CD4-positive, alpha-beta memory T cell (primary cell): ENCODE measurements at regions of chr10 and their contacts with region 1.

Region 1: DNA sequence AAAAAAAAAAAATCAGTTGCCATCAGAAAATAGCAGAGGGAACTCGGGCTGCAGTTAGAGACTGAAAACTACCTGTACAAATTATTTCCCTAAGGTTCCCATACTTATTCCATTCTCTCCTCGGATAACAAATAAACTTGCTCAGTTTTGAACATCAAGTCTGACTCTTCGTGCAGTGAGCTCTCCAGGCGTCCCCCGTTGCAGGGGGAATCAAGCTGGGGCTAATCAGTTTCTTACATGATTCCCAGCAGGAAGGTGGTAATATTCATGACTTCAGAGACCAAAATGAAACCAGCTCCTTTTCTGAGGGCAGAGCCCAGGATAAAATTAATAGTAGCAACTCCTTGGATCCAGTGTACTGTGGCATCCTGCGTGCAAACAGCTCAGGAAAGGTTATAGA is 135.3 kb downstream of the FRMD4A start:
- DNase-seq: no peak
- H3K4me3 ChIP-seq: no peak overlapping the region
- H3K4me3 Mint-ChIP-seq: no peak overlapping the region
- H3K27ac ChIP-seq: no peak overlapping the region
- H3K27ac Mint-ChIP-seq: no peak overlapping the region
- H3K4me1 ChIP-seq: no peaks in the 10 kb centered on the region
- H3K4me1 Mint-ChIP-seq: no peaks in the 10 kb centered on the region
- H3K27me3 ChIP-seq: no peaks in the 10 kb centered on the region
- H3K27me3 Mint-ChIP-seq: peaks cover 19 to 37% of the 10 kb centered on the region in 2 donors

Region 2: GRCh38 chr10:14156104-14156503 is 39.3 kb before region 1 on chr10:
- CTCF ChIA-PET with region 1: no interaction called
- POLR2A ChIA-PET with region 1: no interaction called
- intact Hi-C with region 1: no loop called
- DNase-seq: no peak
- H3K4me3 ChIP-seq: no peak overlapping the region
- H3K4me3 Mint-ChIP-seq: no peak overlapping the region
- H3K27ac ChIP-seq: no peak overlapping the region
- H3K27ac Mint-ChIP-seq: no peak overlapping the region
- H3K4me1 ChIP-seq: no peaks in the 10 kb centered on the region
- H3K4me1 Mint-ChIP-seq: no peaks in the 10 kb centered on the region
- H3K27me3 ChIP-seq: no peaks in the 10 kb centered on the region
- H3K27me3 Mint-ChIP-seq: peaks cover 24 to 31% of the 10 kb centered on the region in 2 donors

Region 3: GRCh38 chr10:14478604-14479003 is 283.2 kb after region 1 on chr10:
- CTCF ChIA-PET with region 1: interaction called, 3 read pairs
- POLR2A ChIA-PET with region 1: no interaction called
- intact Hi-C with region 1: loop called (anchors 2 kb)
- DNase-seq: peak in 1 of 5 donors; percentile 12
- H3K4me3 ChIP-seq: no peak overlapping the region
- H3K4me3 Mint-ChIP-seq: no peak overlapping the region
- H3K27ac ChIP-seq: no peak overlapping the region
- H3K27ac Mint-ChIP-seq: peak overlapping the region in 1 of 7 donors; percentile 32
- H3K4me1 ChIP-seq: no peaks in the 10 kb centered on the region
- H3K4me1 Mint-ChIP-seq: no peaks in the 10 kb centered on the region
- H3K27me3 ChIP-seq: no peaks in the 10 kb centered on the region
- H3K27me3 Mint-ChIP-seq: peaks cover 2 to 4% of the 10 kb centered on the region in 2 donors

Region 4: DNA sequence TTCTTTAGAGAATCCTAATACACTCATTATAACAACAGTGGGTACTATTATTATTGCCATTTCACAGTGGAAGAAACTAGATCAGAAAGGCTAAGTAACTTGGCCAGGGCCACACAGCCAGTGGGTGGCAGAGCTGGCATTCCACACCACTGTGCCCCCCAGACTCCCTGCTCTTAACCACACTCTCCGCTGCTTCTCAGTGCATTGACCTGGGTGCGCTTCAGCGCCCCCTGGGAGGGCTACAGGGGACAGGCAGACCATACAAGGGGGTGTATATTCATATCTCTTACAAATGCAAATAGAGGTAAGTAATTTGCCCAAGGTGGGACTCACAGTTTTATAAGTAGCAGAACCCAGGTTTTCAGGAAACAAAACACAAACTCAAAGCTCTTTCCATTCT is 1050.1 kb after region 1 on chr10:
- CTCF ChIA-PET with region 1: no interaction called
- POLR2A ChIA-PET with region 1: no interaction called
- intact Hi-C with region 1: no loop called
- DNase-seq: no peak
- H3K4me3 ChIP-seq: no peak overlapping the region
- H3K4me3 Mint-ChIP-seq: no peak overlapping the region
- H3K27ac ChIP-seq: no peak overlapping the region
- H3K27ac Mint-ChIP-seq: no peak overlapping the region
- H3K4me1 ChIP-seq: no peaks in the 10 kb centered on the region
- H3K4me1 Mint-ChIP-seq: peaks cover 1 to 26% (median 8%) of the 10 kb centered on the region in 4 donors
- H3K27me3 ChIP-seq: no peaks in the 10 kb centered on the region
- H3K27me3 Mint-ChIP-seq: no peaks in the 10 kb centered on the region